ENCODE measurements at regions of chr11 and their contacts with region 1.

Region 1: GRCh38 chr11:61581030-61581928 is at the start of gene SYT7:
- DNase-seq: peak; percentile 95
- H3K4me3 Mint-ChIP-seq: peak within 1 kb of the TSS; percentile 67
- H3K27ac Mint-ChIP-seq: no peak within 1 kb of the TSS
- H3K4me1 Mint-ChIP-seq: peaks cover 9% of the 10 kb centered on the region
- H3K27me3 Mint-ChIP-seq: peaks cover 37% of the 10 kb centered on the region
- total RNA-seq, gene SYT7: not detected

Region 2: GRCh38 chr11:61392981-61393595 is 188.2 kb before region 1 on chr11:
- CTCF ChIA-PET with region 1: no interaction called
- intact Hi-C with region 1: no loop called
- DNase-seq: peak; percentile 37
- H3K4me3 Mint-ChIP-seq: peak overlapping the region; percentile 89
- H3K27ac Mint-ChIP-seq: peak overlapping the region; percentile 81
- H3K4me1 Mint-ChIP-seq: peaks cover 17% of the 10 kb centered on the region
- H3K27me3 Mint-ChIP-seq: no peaks in the 10 kb centered on the region

Region 3: DNA sequence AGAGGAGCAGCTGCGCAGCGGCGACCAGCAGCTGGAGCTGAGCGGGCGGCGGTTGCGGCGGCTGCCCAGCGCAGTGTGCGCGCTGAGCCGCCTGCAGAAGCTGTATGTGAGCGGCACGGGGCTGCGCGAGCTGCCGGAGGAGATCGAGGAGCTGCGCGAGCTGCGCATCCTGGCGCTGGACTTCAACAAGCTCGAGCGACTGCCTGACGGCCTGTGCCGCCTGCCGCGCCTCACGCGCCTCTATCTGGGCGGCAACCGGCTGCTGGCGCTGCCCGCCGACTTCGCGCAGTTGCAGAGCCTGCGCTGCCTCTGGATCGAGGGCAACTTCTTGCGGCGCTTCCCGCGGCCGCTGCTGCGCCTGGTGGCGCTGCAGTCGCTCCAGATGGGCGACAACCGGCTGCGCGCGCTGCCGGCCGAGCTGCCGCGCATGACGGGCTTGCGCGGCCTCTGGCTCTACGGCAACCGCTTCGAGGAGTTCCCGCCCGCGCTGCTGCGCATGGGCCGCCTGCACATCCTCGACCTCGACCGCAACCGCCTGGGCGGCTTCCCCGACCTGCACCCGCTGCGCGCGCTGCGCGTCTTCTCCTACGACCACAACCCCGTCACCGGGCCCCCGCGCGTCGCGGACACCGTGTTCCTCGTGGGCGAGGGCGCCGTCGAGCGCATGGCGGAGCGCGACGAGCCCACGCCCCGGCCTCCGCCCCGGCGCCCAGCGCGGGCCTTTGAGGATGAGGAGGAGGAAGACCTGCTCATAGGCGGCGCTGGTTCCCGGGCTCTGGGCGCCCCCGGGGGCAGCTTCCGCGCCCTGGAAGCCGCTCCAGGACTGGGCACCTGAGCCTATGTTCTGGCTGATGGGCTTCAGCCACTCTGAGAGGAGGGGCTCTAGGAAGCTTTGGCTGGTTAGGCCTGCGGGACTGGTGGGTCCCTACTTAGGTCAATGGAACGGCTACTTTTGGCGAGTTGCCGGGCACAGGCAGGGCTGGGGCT is 71.9 kb before region 1 on chr11:
- CTCF ChIA-PET with region 1: no interaction called
- intact Hi-C with region 1: loop called (anchors 1 kb)
- DNase-seq: peak; percentile 75
- H3K4me3 Mint-ChIP-seq: peak overlapping the region; percentile 18
- H3K27ac Mint-ChIP-seq: no peak overlapping the region
- H3K4me1 Mint-ChIP-seq: peaks cover 7% of the 10 kb centered on the region
- H3K27me3 Mint-ChIP-seq: peaks cover 47% of the 10 kb centered on the region

Region 4: DNA sequence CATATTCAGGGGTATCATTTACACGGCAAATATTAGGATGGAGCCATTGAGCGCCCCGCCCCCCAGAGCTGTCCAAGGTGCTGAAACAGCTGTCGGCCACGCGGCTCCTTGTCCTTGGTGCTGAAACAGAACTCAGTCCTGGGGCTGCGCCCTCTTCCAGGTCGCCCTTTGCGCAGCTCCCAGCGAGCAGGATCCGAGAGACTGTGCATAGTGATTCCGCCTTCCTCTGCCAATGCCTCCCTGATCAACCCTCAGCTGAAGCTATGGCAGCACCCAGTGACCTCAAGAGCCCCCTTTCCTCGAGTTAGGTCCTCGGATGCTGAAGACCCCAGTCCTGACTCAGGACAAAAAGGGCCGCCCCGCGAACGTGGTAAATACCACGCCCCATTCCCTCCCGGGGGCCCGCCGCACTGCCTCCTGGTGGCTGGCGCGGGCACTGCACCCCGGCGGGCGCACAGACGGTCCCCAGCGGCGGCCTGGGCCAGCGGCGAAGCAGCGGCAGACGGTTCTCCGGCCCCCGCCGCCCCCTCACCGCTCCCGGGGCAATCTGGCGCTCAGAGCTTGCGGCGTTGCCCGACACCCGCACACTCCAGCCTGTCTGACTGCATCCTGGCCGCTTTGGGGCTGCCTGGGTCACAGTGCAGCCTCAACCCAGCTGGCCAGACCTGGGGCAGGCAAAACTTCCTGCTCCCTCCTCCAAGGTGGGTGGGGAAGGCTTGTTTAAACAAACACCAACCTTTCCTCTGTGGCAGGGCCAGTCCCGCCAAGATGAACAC is 13.8 kb before region 1 on chr11:
- CTCF ChIA-PET with region 1: interaction called, 4 read pairs
- intact Hi-C with region 1: loop called (anchors 1 kb)
- DNase-seq: peak; percentile 87
- H3K4me3 Mint-ChIP-seq: no peak overlapping the region
- H3K27ac Mint-ChIP-seq: no peak overlapping the region
- H3K4me1 Mint-ChIP-seq: peaks cover 1% of the 10 kb centered on the region
- H3K27me3 Mint-ChIP-seq: peaks cover 43% of the 10 kb centered on the region

Measured in activated naive CD4-positive, alpha-beta T cell treated with anti-CD3 and anti-CD28 coated beads for 36 hours (primary cell).